Posterior cingulate gyrus (tissue), 11 donors: ENCODE measurements at regions of chr11 and their contacts with region 1.

Region 1: GRCh38 chr11:114059278-114059983 is at the start of gene ZBTB16:
- DNase-seq: peak; percentile 81 to 99 (median 92)

Region 2: DNA sequence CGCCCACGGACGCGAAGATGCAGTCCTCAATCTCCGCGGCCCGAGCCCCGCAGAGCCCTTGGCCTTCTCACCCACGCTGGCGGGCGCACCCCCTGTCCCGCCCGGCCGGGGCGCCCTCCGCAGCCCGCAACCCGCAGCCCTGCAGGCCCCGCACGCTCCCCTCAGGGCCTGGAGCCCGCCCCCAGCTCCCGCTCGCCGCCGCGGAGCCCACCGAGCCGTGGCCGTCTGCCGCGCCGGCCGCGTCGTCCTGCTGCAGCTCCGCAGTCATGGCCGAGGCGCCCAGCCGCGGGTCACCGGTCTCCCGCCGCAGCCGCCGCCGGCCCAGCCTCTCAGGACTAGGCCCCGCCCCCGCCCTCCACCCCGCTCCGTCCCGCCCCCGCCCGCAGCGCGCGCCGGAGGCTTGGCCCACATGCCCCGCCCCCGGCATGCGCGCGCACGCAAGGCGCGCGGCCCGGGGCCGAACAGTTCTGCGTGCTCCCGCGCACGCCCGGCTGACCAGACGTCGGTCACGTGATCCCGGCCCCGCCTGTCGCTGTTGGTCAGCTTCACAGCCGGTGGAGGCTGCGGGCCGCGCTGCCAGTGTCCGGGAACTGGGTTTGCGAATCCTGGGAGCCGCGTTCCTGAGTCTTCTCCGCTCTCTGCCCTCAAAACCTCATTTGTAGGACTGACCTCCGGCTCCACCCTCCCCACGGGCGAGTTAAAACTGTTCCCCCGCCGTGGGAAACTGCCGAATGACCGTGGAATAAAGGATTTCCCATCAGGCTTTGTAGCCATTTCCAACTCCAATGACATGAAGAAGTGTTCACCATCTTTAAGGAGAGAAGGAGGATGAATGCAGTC is 184.0 kb before region 1 on chr11 and contains the start of gene USP28:
- intact Hi-C with region 1: loop called (anchors 2 kb)
- DNase-seq: peak; percentile 95 to 100 (median 98)

Region 3: DNA sequence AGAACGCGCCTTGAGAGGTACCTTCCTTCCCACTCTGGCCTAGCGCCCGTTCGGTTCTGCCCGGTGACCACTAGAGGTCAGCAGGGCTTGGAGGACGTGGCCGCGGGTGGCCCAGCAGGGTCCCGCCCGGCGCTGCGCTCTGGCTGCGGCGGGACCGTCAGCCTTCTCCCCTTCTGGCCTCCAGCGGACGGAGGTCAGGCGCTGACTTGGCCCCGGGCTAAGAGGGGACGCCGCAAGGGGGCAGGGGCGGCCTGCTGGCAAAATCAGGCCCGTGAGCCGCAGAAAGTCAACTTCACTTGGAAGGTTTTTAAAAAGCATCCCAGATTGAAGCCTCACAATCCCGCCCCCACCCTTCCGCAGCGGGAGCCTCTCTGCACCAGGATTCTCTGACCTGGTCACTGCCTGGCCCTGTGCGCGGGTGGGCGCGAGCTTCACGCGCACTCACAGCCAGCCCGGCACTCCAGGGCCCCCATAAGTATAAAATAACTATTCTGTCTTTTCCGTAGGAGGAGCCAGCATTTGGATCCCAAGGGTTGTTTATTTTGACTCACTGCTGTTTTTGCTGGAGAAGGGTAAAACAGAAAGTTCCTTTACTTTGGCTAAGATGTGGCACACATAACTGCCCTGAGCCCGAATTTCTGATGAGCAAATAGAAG is 23.1 kb before region 1 on chr11:
- intact Hi-C with region 1: loop called (anchors 1 kb)
- DNase-seq: peak; percentile 55 to 96 (median 75)

Region 4: DNA sequence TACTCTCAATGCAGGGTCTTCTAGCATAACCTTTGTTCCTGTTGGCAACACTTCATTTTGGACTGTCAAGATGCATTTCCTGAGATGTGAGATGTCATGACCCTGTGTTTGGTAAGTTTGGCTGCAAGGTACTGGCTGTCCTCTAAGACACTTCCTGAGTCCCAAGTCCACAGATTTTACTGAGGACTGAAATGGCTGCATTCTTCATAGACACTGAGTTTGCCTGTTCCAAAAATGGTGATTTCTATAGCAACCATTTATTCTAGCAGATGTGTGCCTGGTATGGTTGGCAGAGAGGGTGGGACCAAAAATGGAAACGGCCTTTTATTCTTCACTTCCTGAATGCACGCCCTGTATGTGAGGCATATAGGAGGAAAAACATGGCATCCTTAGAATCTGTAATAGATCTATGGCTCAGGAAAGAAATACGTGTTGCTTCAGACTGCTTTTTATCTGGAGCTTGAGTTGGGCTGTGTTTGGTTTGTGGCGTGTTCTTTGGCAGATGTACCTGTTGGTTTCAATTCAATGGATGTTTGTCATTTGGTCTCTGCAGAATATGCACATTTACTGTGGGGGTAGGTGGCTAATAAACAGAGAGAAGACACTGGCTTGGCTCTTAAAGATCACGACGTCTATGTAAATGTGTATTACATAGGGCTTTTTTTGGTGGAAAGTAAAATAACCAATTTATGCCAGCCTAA is 62.5 kb after region 1 on chr11:
- intact Hi-C with region 1: loop called (anchors 10 kb)
- DNase-seq: no peak

Region 5: GRCh38 chr11:114159802-114160632 is 100.6 kb after region 1 on chr11:
- intact Hi-C with region 1: loop called (anchors 1 kb)
- DNase-seq: peak; percentile 75 to 98 (median 86)

Region 6: DNA sequence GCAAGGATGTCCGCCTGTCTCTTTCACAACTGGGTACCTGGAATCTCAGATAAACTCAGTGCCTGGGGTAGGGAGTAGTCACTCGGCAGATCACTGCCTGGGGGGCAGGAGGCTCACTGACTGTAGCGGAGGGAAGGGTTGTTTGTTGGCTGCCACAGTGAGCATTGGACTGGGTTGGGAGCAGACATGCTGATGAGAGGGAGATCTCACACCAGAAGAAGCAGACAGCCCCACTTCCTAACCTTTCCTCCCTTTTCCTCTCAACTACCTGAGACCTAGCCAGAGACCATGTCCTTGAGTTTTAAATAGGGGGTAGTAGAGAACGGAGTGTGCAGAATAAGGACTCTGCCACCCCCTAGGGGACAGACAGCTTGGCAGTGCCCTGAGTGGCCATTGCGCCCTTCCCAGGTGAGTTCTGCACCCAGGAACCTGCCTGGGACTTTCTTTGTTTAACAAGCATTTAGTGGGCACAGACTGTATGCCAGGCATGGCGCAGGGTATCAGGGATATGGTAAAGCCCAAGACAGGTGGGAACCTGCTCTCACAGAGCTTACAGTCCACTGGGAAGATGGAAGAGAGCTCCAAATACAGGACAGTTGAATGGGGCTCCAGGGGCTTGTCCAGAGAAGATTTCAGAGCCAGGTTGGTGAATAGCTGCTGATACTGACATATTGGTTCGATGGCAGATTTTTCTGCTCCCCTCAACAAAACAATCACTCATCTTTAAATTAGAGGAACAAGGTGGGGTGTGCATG is 121.0 kb after region 1 on chr11:
- intact Hi-C with region 1: loop called (anchors 1 kb)
- DNase-seq: peak in 3 of 10 donors; percentile 42 to 93 (median 58)